HepG2 (cell line): ENCODE measurements at regions of chr12 and their contacts with region 1.

Region 1: DNA sequence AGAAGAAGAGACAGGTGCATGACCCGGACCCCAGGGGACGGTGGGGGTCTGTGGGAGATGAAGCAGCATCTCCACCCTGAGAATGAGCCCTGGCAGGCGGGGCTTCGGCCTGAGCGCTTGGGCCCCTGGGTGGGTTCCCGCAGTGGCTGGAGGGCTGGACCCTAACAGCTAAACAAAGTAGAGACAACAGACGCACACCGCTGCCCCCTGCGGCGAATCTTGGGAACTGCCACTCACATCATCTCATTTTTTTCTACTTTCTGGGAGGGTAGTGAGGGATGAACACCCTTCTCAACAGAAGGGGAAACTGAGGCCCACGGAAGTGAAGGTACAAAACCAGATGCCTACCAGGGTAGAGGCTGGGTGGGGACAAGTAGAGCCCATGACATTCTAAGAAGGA is 104.7 kb downstream of the RFLNA start:
- DNase-seq: peak; percentile 18
- ATAC-seq: peak; percentile 57
- H3K4me3 ChIP-seq: no peak overlapping the region
- H3K27ac ChIP-seq: no peak overlapping the region
- H3K4me1 ChIP-seq: no peaks in the 10 kb centered on the region
- H3K27me3 ChIP-seq: no peaks in the 10 kb centered on the region
- CTCF ChIP-seq: peak; percentile 78
- EP300 ChIP-seq: no peak
- POLR2A ChIP-seq: no peak
- RAD21 ChIP-seq: peak; percentile 55

Region 2: GRCh38 chr12:124332068-124332672 is 67.5 kb before region 1 on chr12:
- CTCF ChIA-PET with region 1: no interaction called
- POLR2A ChIA-PET with region 1: no interaction called
- in situ Hi-C with region 1: no loop called
- intact Hi-C with region 1: loop called (anchors 1 kb)
- DNase-seq: no peak
- ATAC-seq: peak; percentile 68
- H3K4me3 ChIP-seq: no peak overlapping the region
- H3K27ac ChIP-seq: no peak overlapping the region
- H3K4me1 ChIP-seq: no peaks in the 10 kb centered on the region
- H3K27me3 ChIP-seq: no peaks in the 10 kb centered on the region
- CTCF ChIP-seq: peak; percentile 62
- EP300 ChIP-seq: no peak
- POLR2A ChIP-seq: no peak
- RAD21 ChIP-seq: peak; percentile 57

Region 3: DNA sequence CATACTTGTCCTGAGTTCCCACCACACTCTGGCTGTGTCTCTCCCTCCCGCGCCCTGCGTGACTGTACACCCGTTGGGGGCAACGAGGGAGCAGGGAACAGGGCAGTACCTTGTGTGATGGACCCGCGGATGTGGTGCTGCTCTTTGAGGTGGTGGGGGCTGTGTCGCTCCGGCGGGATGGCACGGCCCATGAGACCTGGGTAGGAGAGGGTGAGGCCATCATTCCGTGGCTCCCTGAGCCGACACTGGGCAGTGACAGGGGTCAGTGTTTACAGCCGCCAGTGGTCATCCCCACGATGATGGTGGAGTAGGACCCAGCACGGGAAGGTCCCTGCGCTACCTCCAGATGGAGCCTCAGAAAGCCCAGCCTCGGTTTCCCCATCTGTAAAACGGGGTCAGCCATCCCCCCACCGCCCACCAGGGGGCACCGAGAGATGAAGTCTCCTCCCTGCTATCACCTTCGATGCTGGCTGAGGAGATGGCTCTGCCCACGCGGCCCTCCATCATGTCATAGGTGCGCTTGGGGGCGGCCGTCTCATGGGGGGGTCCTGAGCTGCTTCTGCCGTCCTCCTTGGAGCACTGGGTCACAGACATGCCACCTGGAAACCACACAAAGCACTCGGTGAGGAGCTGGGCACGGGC is 51.8 kb before region 1 on chr12:
- CTCF ChIA-PET with region 1: interaction called, 3 read pairs
- POLR2A ChIA-PET with region 1: no interaction called
- in situ Hi-C with region 1: no loop called
- intact Hi-C with region 1: loop called (anchors 2 kb)
- DNase-seq: peak; percentile 27
- ATAC-seq: peak; percentile 40
- H3K4me3 ChIP-seq: no peak overlapping the region
- H3K27ac ChIP-seq: no peak overlapping the region
- H3K4me1 ChIP-seq: peaks cover 8% of the 10 kb centered on the region
- H3K27me3 ChIP-seq: no peaks in the 10 kb centered on the region
- CTCF ChIP-seq: peak; percentile 82
- EP300 ChIP-seq: no peak
- POLR2A ChIP-seq: no peak
- RAD21 ChIP-seq: peak; percentile 70